ENCODE measurements at regions of chr10 and their contacts with region 1.

Region 1: GRCh38 chr10:118662228-118663035 is 67.0 kb upstream of the PRLHR start:
- DNase-seq: peak in 7 of 9 donors; percentile 21 to 69 (median 49)
- ATAC-seq: peak; percentile 53
- H3K4me3 ChIP-seq: peak overlapping the region; percentile 27
- H3K4me3 Mint-ChIP-seq: peak overlapping the region in 9 of 10 donors; percentile 56 to 85 (median 69)
- H3K27ac ChIP-seq: no peak overlapping the region
- H3K27ac Mint-ChIP-seq: peak overlapping the region in 8 of 9 donors; percentile 69 to 94 (median 80)
- H3K4me1 ChIP-seq: peaks cover 19 to 58% of the 10 kb centered on the region in 2 donors
- H3K4me1 Mint-ChIP-seq: peaks cover 35 to 91% (median 74%) of the 10 kb centered on the region in 7 donors
- H3K27me3 ChIP-seq: no peaks in the 10 kb centered on the region
- H3K27me3 Mint-ChIP-seq: peaks cover 0 to 14% (median 0%) of the 10 kb centered on the region in 5 donors

Region 2: GRCh38 chr10:118594392-118595063 is 67.9 kb before region 1 on chr10:
- CTCF ChIA-PET with region 1: interaction called, 3 read pairs
- POLR2A ChIA-PET with region 1: no interaction called
- intact Hi-C with region 1: loop called in 1 of 2 experiments (anchors 2 kb)
- DNase-seq: peak; percentile 21 to 59 (median 35)
- ATAC-seq: peak; percentile 81
- H3K4me3 ChIP-seq: no peak overlapping the region
- H3K4me3 Mint-ChIP-seq: peak overlapping the region in 7 of 10 donors; percentile 18 to 75 (median 53)
- H3K27ac ChIP-seq: no peak overlapping the region
- H3K27ac Mint-ChIP-seq: no peak overlapping the region
- H3K4me1 ChIP-seq: peaks cover 0 to 17% of the 10 kb centered on the region in 2 donors
- H3K4me1 Mint-ChIP-seq: peaks cover 9 to 37% (median 27%) of the 10 kb centered on the region in 7 donors
- H3K27me3 ChIP-seq: peaks cover 0 to 17% of the 10 kb centered on the region in 2 donors
- H3K27me3 Mint-ChIP-seq: peaks cover 54 to 67% (median 65%) of the 10 kb centered on the region in 5 donors

Region 3: DNA sequence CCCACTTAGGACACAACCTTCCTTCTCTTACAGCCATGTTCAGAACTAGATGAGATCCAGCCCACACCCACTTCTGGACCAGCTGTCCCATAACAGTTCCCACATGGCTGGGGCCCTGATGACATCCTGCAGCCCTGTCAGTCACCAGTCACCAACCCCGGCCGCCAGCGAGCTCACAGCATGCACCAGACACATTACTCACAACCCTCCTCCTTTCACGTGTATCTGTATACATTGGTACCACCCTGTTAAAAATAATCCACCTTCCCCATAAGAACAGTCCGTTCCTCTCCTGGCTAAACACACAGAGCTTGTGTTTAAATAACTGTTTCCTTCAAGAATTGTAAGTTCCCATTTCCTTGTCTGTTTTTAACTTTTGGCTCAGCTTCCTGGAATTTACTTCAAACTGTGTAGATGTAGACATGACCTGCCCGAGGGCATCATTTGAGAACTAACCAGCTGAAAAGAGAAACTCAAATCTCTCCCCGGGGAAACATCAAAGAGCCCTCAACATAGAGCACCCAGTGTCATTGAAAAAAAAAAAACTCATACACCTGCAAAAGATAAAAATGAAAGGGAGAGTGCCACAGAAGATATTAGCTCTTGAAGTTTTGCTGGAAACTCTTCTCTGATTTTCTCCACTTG is 41.0 kb before region 1 on chr10:
- CTCF ChIA-PET with region 1: no interaction called
- POLR2A ChIA-PET with region 1: interaction called, 3 read pairs
- intact Hi-C with region 1: loop called in 1 of 2 experiments (anchors 5 kb)
- DNase-seq: peak in 7 of 9 donors; percentile 12 to 75 (median 52)
- ATAC-seq: peak; percentile 69
- H3K4me3 ChIP-seq: peak overlapping the region; percentile 13
- H3K4me3 Mint-ChIP-seq: peak overlapping the region; percentile 8 to 80 (median 70)
- H3K27ac ChIP-seq: peak overlapping the region; percentile 19
- H3K27ac Mint-ChIP-seq: peak overlapping the region in 8 of 9 donors; percentile 41 to 90 (median 75)
- H3K4me1 ChIP-seq: peaks cover 0 to 13% of the 10 kb centered on the region in 2 donors
- H3K4me1 Mint-ChIP-seq: peaks cover 10 to 42% (median 36%) of the 10 kb centered on the region in 7 donors
- H3K27me3 ChIP-seq: no peaks in the 10 kb centered on the region
- H3K27me3 Mint-ChIP-seq: peaks cover 0 to 5% (median 0%) of the 10 kb centered on the region in 5 donors

Region 4: GRCh38 chr10:118720685-118721538 is 58.5 kb after region 1 on chr10:
- CTCF ChIA-PET with region 1: interaction called, 6 read pairs
- POLR2A ChIA-PET with region 1: no interaction called
- intact Hi-C with region 1: loop called in 1 of 2 experiments (anchors 2 kb)
- DNase-seq: peak; percentile 15 to 75 (median 64)
- ATAC-seq: peak; percentile 78
- H3K4me3 ChIP-seq: no peak overlapping the region
- H3K4me3 Mint-ChIP-seq: no peak overlapping the region
- H3K27ac ChIP-seq: no peak overlapping the region
- H3K27ac Mint-ChIP-seq: peak overlapping the region in 1 of 9 donors; percentile 21
- H3K4me1 ChIP-seq: peaks cover 0 to 8% of the 10 kb centered on the region in 2 donors
- H3K4me1 Mint-ChIP-seq: peaks cover 6 to 36% (median 24%) of the 10 kb centered on the region in 7 donors
- H3K27me3 ChIP-seq: no peaks in the 10 kb centered on the region
- H3K27me3 Mint-ChIP-seq: no peaks in the 10 kb centered on the region

Region 5: DNA sequence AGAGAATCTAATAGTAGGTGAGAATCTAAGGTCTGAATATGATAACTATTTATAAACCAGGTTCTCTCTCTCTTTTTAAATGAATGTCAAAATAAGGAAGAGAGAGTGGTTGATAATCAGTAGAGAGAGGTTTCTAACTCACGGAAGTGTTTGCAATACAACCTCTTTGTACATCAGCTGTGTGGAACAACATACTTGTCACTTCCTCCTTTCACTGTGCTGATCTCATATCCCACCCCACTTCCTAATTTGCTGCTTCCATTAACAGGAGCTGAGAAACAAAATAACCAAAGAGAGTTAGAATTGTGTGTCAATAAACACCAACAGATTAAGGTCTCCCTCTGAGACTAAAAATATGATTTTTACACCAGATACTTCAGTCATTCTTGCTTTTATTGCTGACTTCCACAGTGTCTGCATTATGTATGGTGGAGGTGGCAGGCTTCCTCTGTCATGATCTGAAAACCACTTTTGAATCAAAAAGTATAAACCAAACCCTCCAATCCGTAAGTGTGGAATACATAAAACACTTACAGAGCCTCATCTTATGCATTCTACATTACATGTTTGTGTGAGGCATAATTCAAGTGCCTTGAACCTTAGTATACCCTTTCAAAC is 67.3 kb after region 1 on chr10:
- CTCF ChIA-PET with region 1: no interaction called
- POLR2A ChIA-PET with region 1: interaction called, 3 read pairs
- intact Hi-C with region 1: loop called in 1 of 2 experiments (anchors 2 kb)
- DNase-seq: peak in 7 of 9 donors; percentile 22 to 54 (median 51)
- ATAC-seq: peak; percentile 85
- H3K4me3 ChIP-seq: no peak overlapping the region
- H3K4me3 Mint-ChIP-seq: peak overlapping the region in 9 of 10 donors; percentile 26 to 79 (median 65)
- H3K27ac ChIP-seq: peak overlapping the region; percentile 14
- H3K27ac Mint-ChIP-seq: peak overlapping the region; percentile 29 to 95 (median 78)
- H3K4me1 ChIP-seq: peaks cover 39 to 58% of the 10 kb centered on the region in 2 donors
- H3K4me1 Mint-ChIP-seq: peaks cover 47 to 80% (median 69%) of the 10 kb centered on the region in 7 donors
- H3K27me3 ChIP-seq: no peaks in the 10 kb centered on the region
- H3K27me3 Mint-ChIP-seq: no peaks in the 10 kb centered on the region

Region 6: DNA sequence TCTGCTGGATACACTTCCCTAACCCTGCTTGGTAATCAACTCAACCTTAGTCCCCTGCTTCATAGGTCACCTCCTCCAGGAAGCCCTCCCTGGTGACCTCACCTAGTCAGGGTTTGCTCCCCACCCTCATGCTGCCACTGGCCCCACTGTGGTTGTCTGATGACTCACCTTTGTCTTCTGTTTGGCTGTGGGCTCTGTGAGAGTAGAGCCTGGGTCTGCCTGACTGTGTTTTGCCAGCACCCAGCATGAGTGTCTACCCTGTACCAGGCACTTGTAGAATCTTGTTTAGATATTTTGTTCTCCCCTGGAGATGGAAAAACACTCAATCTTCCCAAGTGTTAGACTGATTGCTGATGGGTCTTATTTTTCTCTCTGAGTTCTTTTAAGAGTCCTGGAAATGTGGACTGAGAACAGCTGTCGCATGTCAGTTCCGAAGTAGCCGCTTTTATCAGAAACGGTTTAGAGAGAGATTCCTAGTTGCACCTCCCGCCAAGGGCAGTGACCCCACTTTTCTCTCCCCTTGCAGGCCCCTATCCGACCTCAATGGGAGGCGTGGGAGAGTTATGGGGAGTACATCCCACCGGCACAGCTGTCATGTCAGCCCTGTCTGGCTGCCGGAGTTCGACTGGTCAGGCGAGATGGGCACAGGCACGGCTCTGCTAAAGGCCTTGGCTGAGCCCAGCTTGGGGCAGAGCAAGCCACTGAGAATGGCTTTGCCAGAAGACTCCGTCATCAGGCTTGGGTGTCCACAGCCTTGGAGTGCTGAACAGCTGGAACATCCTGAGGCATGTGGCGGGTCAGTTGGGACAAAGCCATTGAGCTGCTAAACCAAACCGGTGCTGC is 679.2 kb after region 1 on chr10:
- CTCF ChIA-PET with region 1: no interaction called
- POLR2A ChIA-PET with region 1: no interaction called
- intact Hi-C with region 1: no loop called
- DNase-seq: peak in 1 of 9 donors; percentile 38
- ATAC-seq: peak; percentile 22
- H3K4me3 ChIP-seq: no peak overlapping the region
- H3K4me3 Mint-ChIP-seq: no peak overlapping the region
- H3K27ac ChIP-seq: no peak overlapping the region
- H3K27ac Mint-ChIP-seq: peak overlapping the region in 5 of 9 donors; percentile 22 to 87 (median 64)
- H3K4me1 ChIP-seq: no peaks in the 10 kb centered on the region
- H3K4me1 Mint-ChIP-seq: peaks cover 27 to 59% (median 42%) of the 10 kb centered on the region in 7 donors
- H3K27me3 ChIP-seq: no peaks in the 10 kb centered on the region
- H3K27me3 Mint-ChIP-seq: no peaks in the 10 kb centered on the region